ENCODE measurements at regions of chr11 and their contacts with region 1.

Region 1: DNA sequence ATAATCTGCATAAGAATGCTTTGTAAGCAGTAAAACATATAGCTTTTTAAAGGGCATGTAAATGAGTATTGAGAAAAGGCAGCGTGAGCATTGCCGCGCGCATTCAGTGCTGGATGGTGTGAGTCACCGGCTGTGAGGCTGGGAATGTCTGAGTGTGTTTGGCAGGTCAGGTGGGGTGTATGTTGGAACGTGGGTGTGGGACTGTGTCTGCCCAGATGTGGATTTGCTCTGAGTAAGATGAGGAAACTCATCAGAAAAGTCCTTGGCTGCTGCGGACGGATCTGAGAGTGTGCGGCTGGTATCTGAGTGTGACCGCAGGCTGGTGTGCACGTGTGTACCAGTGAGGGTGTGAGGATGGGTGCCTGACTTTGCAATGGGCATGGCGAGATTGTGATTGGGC is 66.2 kb upstream of the NECTIN1 start:
- DNase-seq: no peak
- H3K4me3 ChIP-seq: no peak overlapping the region
- H3K27ac ChIP-seq: no peak overlapping the region
- H3K4me1 ChIP-seq: no peaks in the 10 kb centered on the region
- H3K27me3 ChIP-seq: peaks cover 89% of the 10 kb centered on the region
- CTCF ChIP-seq: no peak

Region 2: GRCh38 chr11:119488256-119488995 is 306.8 kb before region 1 on chr11:
- CTCF ChIA-PET with region 1: no interaction called
- POLR2A ChIA-PET with region 1: interaction called, 13 read pairs
- intact Hi-C with region 1: no loop called
- DNase-seq: no peak
- H3K4me3 ChIP-seq: no peak overlapping the region
- H3K27ac ChIP-seq: no peak overlapping the region
- H3K4me1 ChIP-seq: no peaks in the 10 kb centered on the region
- H3K27me3 ChIP-seq: peaks cover 52% of the 10 kb centered on the region
- CTCF ChIP-seq: no peak